Aorta (tissue), 5 donors: ENCODE measurements at regions of chr4 and their contacts with region 1.

Region 1: GRCh38 chr4:39134683-39135319 is 47.5 kb upstream of the WDR19 start:
- DNase-seq: no peak
- ATAC-seq: no peak
- H3K4me3 ChIP-seq: no peak overlapping the region
- H3K27ac ChIP-seq: no peak overlapping the region
- H3K4me1 ChIP-seq: no peaks in the 10 kb centered on the region
- H3K27me3 ChIP-seq: no peaks in the 10 kb centered on the region

Region 2: DNA sequence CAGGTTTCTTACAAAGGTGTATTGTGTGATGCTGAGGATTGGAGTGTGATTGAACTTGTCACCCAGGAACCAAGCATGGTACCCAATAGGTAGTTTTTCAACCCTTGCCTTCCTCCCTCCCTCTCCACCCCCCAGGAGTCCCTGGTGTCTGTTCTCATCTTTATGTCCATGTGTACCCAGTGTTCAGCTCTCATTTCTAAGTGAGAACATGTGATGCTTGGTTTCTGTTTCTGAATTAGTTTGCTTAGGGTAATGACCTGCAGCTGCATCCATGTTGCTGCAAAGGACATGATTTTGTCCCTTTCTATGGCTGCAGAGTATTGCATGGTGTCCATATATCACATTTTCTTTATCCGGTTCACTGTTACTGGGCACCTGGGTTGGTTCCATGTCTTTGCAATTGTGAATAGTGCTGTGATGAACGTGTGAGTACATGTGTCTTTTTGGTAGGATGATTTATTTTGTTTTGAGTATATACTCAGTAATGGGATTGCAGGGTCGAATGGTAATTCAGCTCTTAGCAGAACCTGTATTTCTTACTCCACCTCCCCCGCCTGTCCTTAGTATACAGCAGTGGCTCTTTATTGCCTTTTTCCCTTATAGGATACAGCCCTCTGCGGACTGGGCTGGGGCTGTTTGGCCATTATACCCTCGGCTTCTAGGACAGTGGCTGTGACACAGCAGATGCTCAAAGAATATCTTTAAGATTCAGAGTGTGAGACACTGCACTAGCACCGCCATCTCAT is 1029.2 kb before region 1 on chr4:
- intact Hi-C with region 1: no loop called
- DNase-seq: no peak
- ATAC-seq: no peak
- H3K4me3 ChIP-seq: no peak overlapping the region
- H3K27ac ChIP-seq: no peak overlapping the region
- H3K4me1 ChIP-seq: no peaks in the 10 kb centered on the region
- H3K27me3 ChIP-seq: no peaks in the 10 kb centered on the region

Region 3: GRCh38 chr4:38759113-38759789 is 375.6 kb before region 1 on chr4:
- intact Hi-C with region 1: loop called (anchors 10 kb)
- DNase-seq: peak in 1 of 2 donors; percentile 63
- ATAC-seq: peak; percentile 79
- H3K4me3 ChIP-seq: no peak overlapping the region
- H3K27ac ChIP-seq: no peak overlapping the region
- H3K4me1 ChIP-seq: no peaks in the 10 kb centered on the region
- H3K27me3 ChIP-seq: no peaks in the 10 kb centered on the region

Region 4: DNA sequence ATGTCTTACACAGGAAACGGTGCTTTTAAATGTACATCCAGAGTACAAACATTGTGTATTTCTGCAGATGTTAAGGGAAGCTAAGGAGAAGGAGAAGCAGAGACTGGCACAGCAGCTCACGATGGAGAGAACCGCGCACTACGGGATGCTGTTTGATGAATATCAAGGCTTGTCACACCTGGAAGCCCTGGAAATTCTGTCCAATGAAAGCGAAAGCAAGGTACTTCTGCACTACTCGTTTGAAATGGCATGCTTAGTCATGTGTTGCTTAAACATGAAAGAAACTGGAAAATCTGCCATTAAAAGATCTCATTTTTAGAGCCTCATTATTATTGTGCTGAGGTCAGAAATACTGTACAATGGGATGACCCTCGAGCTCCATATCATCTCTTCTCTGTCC is 219.9 kb before region 1 on chr4:
- intact Hi-C with region 1: loop called in 1 of 2 experiments (anchors 10 kb)
- DNase-seq: no peak
- ATAC-seq: no peak
- H3K4me3 ChIP-seq: no peak overlapping the region
- H3K27ac ChIP-seq: no peak overlapping the region
- H3K4me1 ChIP-seq: no peaks in the 10 kb centered on the region
- H3K27me3 ChIP-seq: no peaks in the 10 kb centered on the region

Region 5: DNA sequence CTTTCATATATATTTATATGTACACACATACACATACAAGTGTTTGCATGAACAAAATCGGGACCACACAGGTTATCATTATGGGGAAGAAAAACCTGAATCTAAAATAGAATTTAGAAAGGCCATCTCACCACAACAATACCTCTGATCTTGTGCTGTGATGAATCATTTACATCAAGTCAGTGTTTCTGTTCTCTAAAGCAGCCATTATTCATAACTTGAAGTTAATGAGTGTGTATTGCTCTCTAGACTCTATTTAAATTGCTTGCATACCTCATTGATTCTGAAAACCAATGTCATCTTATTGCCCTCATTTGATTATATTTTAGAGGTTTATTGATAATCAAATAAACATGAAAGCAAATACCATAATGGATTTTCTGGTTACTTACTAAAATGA is 195.6 kb before region 1 on chr4:
- intact Hi-C with region 1: loop called in 1 of 2 experiments (anchors 10 kb)
- DNase-seq: no peak
- ATAC-seq: no peak
- H3K4me3 ChIP-seq: no peak overlapping the region
- H3K27ac ChIP-seq: no peak overlapping the region
- H3K4me1 ChIP-seq: no peaks in the 10 kb centered on the region
- H3K27me3 ChIP-seq: no peaks in the 10 kb centered on the region

Region 6: GRCh38 chr4:39205000-39205399 is 70.2 kb after region 1 on chr4:
- intact Hi-C with region 1: no loop called
- DNase-seq: no peak
- ATAC-seq: peak; percentile 41
- H3K4me3 ChIP-seq: no peak overlapping the region
- H3K27ac ChIP-seq: no peak overlapping the region
- H3K4me1 ChIP-seq: no peaks in the 10 kb centered on the region
- H3K27me3 ChIP-seq: no peaks in the 10 kb centered on the region

Region 7: DNA sequence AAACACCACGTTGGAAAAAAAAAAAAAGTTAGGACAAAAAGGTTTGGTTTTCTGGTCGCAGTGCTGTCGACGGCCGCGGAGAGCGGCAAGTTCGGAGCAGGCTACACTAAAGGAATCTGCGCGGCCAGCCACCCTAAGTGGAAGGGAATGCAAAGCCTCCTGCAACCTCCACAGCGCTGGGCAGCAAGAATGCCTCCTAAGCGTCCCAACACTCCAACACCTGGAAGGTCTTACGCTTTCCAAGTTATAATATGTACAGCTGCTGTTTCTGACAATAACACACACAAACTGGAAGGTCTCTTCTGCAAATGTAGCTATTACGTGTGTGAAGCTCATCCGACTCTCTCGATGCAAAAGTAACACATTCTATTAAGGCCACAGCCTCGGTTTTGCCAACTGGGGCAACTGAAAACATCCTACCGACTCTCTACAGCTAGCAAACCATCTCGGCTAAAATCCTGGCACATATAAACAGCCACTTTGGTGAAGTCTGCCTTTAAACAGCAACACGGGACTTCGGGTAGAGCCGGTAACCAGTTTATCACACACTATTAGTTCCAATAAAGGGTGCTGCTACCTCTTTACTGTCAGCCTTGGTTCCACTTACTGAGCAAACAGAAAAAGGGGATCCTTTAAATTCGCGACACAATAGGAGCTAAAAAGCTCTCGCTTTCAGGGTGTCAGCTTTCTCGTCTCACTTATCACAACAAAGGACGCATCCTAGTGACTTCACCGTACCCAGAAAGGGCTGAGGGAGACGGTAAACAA is 503.0 kb after region 1 on chr4:
- intact Hi-C with region 1: no loop called
- DNase-seq: peak; percentile 74 to 82
- ATAC-seq: peak; percentile 65
- H3K4me3 ChIP-seq: peak overlapping the region; percentile 82 to 92
- H3K27ac ChIP-seq: peak overlapping the region; percentile 10 to 97
- H3K4me1 ChIP-seq: no peaks in the 10 kb centered on the region
- H3K27me3 ChIP-seq: no peaks in the 10 kb centered on the region